Thyroid gland (tissue), 4 donors: ENCODE measurements at regions of chrX and their contacts with region 1.

Region 1: DNA sequence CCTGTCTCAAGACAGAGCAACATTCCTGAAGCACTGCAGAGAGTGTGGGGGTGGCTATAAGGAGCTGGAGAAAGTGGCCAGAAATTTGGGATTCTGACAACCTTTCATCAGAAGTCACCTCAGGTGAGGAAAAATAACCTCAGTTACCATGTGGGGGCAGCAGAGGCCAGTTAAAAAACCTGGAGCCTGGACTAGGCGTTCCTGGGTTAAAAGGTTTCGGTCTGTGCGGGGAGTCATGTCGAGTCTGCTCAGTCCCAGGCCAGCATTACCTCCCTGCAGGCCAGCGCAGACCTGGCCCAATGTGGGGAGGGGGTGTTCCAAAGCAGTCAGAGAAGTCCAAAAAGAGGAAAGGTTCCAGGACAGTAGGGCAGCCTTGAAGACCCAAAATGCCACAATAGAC is 10.9 kb upstream of the NALF2 start:
- DNase-seq: peak; percentile 36 to 54
- H3K4me3 ChIP-seq: no peak overlapping the region
- H3K27ac ChIP-seq: no peak overlapping the region
- H3K4me1 ChIP-seq: no peaks in the 10 kb centered on the region
- H3K27me3 ChIP-seq: no peaks in the 10 kb centered on the region
- CTCF ChIP-seq: peak in 4 of 6 experiments; percentile 33 to 67 (median 52)
- POLR2A ChIP-seq: no peak

Region 2: DNA sequence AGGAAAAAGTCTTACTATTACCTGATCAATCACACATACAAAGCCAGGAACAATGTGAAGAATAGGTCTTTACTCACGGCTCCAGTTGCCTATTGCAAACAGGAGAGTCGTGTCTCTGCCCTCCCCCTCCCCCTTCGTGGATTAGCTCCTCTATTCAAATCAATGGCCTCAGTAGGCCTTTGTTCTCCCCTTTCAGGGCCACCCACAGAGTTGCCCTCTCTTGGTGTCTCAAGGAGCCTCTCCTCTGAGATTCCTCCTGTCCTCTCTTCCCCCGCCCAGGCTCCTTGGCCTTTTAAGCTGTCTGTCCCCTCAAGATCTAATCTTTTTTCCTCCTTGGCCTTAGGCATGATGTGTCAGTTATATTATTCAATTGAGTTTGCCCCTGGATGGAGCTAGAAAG is 96.3 kb before region 1 on chrX:
- intact Hi-C with region 1: no loop called
- DNase-seq: no peak
- H3K4me3 ChIP-seq: no peak overlapping the region
- H3K27ac ChIP-seq: no peak overlapping the region
- H3K4me1 ChIP-seq: no peaks in the 10 kb centered on the region
- H3K27me3 ChIP-seq: no peaks in the 10 kb centered on the region
- CTCF ChIP-seq: no peak
- POLR2A ChIP-seq: no peak

Region 3: DNA sequence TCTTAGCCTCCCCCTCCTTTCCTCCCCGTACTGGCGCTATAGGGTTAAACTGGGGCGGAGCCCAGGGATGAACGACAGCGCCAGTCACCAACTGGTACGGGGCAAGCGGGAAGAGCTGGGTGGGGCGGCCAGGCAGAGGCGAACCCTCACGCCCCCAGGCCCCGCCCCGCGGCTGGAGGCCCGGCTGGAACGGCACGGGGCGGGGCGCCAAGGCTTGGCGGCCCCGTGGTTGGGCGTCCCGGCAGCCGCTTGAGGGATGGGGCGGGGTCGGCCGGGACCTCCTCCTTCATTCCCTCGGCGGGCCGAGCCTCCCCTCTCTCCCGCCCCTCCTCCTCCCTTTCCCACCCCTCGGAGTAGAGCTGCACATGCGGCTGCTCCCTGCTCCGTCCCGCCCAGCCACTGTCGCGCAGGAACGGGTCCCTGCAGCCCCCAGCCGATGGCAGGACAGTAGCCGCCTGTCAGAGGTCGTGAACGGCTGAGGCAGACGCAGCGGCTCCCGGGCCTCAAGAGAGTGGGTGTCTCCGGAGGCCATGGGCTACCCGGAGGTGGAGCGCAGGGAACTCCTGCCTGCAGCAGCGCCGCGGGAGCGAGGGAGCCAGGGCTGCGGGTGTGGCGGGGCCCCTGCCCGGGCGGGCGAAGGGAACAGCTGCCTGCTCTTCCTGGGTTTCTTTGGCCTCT is 122.7 kb after region 1 on chrX and contains the start of gene EDA:
- intact Hi-C with region 1: loop called (anchors 5 kb)
- DNase-seq: peak; percentile 87 to 88
- H3K4me3 ChIP-seq: peak within 1 kb of the TSS in 2 of 3 donors; percentile 44 to 45
- H3K27ac ChIP-seq: peak within 1 kb of the TSS in 1 of 3 donors; percentile 37
- H3K4me1 ChIP-seq: no peaks in the 10 kb centered on the region
- H3K27me3 ChIP-seq: no peaks in the 10 kb centered on the region
- CTCF ChIP-seq: no peak
- POLR2A ChIP-seq: peak in 1 of 2 donors; percentile 34
- total RNA-seq, gene EDA: 6.2 to 27.0 (median 14.2) TPM